ENCODE measurements at regions of chr20 and their contacts with region 1.

Region 1: DNA sequence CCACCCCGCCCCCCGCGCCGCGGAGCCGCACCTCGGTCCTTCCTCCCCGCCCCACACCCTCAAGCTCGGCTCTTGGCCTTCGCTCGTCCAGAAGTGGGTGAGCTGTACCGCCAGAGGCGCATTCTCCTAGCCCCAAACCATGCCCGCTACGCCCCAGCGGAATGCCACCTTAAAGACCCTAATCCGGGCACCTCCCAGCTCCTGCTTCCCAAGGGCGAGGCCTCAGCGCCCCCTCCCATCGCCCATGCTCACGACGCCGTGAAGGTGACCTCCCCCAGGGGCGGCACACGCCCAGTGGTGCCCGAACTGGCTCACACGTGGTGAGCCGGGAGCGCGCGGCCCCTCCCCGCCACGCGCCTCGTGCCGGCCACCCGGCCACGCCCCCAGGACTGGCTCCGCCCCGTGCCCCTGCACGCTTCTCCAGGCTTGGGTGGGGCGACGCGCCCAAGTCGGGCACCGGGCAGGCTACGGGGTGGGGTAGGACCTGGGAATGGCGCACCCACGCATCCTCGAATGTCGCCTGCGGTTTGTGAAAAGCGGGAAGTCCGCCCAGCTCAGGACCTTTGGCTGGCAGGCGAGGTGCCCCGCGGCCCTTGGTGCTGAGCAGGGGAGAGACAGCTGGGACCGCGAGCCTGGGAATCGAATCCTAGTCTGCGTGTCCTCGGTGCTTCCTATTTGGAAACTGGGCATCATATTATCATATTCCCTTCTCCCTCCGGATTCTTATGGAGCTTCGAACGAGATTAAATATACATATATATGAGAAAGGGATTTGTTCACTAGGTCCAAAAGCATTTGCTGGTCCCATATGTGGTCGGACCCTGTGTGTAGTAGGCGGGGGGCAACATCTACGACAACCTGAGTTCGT is 941 bp upstream of the SOX12 start:
- DNase-seq: peak; percentile 93
- ATAC-seq: peak; percentile 62
- H3K4me3 Mint-ChIP-seq: peak overlapping the region; percentile 80
- H3K27ac Mint-ChIP-seq: peak overlapping the region; percentile 83
- H3K4me1 Mint-ChIP-seq: peaks cover 13% of the 10 kb centered on the region
- H3K27me3 Mint-ChIP-seq: no peaks in the 10 kb centered on the region

Region 2: GRCh38 chr20:208942-209566 is 115.4 kb before region 1 on chr20:
- CTCF ChIA-PET with region 1: interaction called, 3 read pairs
- POLR2A ChIA-PET with region 1: no interaction called
- intact Hi-C with region 1: loop called in 1 of 2 experiments (anchors 5 kb)
- DNase-seq: peak; percentile 26
- ATAC-seq: peak; percentile 99
- H3K4me3 Mint-ChIP-seq: no peak overlapping the region
- H3K27ac Mint-ChIP-seq: no peak overlapping the region
- H3K4me1 Mint-ChIP-seq: no peaks in the 10 kb centered on the region
- H3K27me3 Mint-ChIP-seq: peaks cover 6% of the 10 kb centered on the region

Region 3: DNA sequence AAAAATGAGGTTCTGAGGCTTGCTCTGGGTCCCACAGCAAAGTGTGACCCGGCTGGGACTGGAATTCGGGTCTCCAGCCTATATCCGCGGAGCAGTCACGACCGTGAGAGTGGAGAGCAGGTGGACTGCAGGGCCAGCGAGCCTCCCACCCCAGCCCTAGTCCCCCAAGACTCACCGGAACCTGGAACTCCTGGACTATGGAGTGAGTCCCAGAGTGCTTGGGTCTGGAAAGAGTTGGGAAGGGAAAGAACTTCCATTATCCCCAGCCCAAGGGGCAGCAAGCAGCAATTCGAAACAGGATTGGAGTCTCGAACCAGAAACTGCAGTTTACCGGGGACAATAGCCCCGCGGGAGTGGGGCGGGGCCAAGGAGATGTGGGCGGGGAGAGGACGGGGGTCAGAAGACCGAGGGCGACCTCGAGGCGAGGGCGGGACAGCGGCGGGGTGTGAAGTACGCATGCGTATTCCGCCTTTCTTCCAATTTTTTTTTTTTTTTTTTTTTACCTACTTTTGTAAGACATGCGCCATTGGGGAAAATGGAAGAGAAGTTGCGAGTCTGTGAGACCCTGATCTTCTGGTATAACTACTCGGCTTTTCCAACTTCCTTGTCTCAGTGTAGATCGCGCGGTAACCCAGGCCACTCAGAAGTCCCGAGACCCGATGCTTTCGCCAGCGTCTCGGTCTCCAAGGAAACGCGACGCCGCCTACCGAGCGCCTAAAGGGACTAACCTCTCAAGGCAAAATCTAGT is 34.2 kb before region 1 on chr20 and contains the start of gene C20orf96:
- CTCF ChIA-PET with region 1: no interaction called
- POLR2A ChIA-PET with region 1: no interaction called
- intact Hi-C with region 1: loop called (anchors 1 kb)
- DNase-seq: peak; percentile 94
- ATAC-seq: peak; percentile 94
- H3K4me3 Mint-ChIP-seq: no peak within 1 kb of the TSS
- H3K27ac Mint-ChIP-seq: peak within 1 kb of the TSS; percentile 85
- H3K4me1 Mint-ChIP-seq: peaks cover 15% of the 10 kb centered on the region
- H3K27me3 Mint-ChIP-seq: no peaks in the 10 kb centered on the region
- total RNA-seq, gene C20orf96: 7.0 to 8.1 TPM

Region 4: DNA sequence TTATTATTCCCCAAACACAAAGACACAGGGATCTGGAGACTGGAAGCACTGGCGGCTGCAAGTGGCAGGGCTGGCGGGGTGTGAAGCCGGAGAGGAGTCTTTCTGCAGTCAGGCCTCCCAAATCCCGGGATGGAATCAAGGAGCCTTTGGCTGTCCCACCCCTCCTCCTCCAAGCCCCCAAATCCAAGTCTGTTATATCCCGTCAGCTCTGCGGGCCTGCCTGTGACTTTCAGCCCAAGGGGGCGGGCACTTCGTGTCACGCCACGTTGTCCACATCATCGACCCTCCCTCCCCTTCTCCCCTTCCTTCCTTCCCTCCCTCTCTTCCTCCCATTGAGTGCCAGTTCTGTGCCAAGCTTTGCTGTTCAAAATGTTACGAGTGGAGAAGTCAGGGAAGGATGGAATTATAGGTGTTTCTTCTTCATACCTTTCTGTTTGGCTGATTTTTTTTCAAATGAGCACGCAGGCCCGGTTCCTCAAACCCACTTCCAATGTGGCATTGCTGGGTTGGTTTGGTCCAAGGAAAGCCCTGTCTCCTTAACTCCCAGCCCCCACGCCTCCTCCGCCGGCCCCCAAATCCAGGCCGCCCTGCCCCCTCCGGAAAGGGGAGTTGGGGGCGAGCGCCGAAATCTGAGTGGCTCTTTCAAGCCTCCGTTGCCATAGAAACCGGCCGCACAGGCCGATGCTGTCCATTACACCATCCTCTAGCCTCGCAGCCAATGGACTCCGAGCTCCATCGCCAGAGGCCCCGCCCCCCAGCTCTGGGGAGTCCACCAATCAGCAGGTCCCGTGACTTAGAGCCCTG is 14.4 kb before region 1 on chr20:
- CTCF ChIA-PET with region 1: interaction called, 9 read pairs
- POLR2A ChIA-PET with region 1: interaction called, 3 read pairs
- intact Hi-C with region 1: loop called (anchors 1 kb)
- DNase-seq: peak; percentile 91
- ATAC-seq: peak; percentile 100
- H3K4me3 Mint-ChIP-seq: peak overlapping the region; percentile 56
- H3K27ac Mint-ChIP-seq: no peak overlapping the region
- H3K4me1 Mint-ChIP-seq: peaks cover 11% of the 10 kb centered on the region
- H3K27me3 Mint-ChIP-seq: no peaks in the 10 kb centered on the region

Region 5: DNA sequence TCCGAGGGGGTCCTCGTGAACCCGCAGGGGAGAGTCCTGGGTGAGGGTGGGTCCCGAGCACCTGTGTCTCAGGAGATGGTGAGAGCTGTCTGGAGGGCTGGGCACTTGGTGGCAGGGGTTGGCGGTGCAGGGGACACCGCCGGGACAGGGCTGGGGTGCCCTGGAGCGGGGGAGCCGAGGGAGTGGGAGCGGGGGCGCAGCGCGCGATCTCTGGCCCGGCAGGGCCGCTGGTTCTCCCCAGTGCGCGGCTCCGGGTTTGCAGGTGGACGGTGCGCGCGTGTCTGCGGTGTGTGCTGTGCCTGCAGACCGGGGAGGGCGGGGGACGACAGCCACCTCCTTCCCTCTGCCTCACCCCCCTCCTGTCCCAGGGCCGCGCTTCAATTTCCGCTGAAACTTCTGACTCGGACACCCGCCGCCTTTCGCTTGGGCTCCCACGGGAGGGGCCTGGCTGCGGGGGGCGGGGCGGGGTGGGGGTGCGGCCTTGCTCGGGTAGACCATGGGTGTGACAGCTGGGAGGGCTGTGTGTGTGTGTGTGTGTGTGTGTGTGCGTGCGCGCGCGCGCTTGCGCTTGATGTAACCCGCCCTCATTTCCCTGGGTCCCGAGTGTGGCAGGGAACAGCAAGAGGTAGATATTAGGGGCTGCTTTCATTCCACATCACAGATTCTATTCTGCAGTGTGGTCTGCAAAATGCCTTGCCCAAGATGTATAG is 57.3 kb after region 1 on chr20:
- CTCF ChIA-PET with region 1: interaction called, 3 read pairs
- POLR2A ChIA-PET with region 1: no interaction called
- intact Hi-C with region 1: loop called in 1 of 2 experiments (anchors 1 kb)
- DNase-seq: peak; percentile 88
- ATAC-seq: peak; percentile 70
- H3K4me3 Mint-ChIP-seq: peak overlapping the region; percentile 81
- H3K27ac Mint-ChIP-seq: peak overlapping the region; percentile 83
- H3K4me1 Mint-ChIP-seq: peaks cover 14% of the 10 kb centered on the region
- H3K27me3 Mint-ChIP-seq: no peaks in the 10 kb centered on the region

Region 6: GRCh38 chr20:433300-433975 is 109.0 kb after region 1 on chr20:
- CTCF ChIA-PET with region 1: no interaction called
- POLR2A ChIA-PET with region 1: no interaction called
- intact Hi-C with region 1: loop called in 1 of 2 experiments (anchors 1 kb)
- DNase-seq: peak; percentile 86
- ATAC-seq: peak; percentile 86
- H3K4me3 Mint-ChIP-seq: peak overlapping the region; percentile 51
- H3K27ac Mint-ChIP-seq: peak overlapping the region; percentile 94
- H3K4me1 Mint-ChIP-seq: peaks cover 67% of the 10 kb centered on the region
- H3K27me3 Mint-ChIP-seq: no peaks in the 10 kb centered on the region

Region 7: GRCh38 chr20:530321-530720 is 205.9 kb after region 1 on chr20:
- CTCF ChIA-PET with region 1: no interaction called
- POLR2A ChIA-PET with region 1: no interaction called
- intact Hi-C with region 1: no loop called
- DNase-seq: no peak
- ATAC-seq: no peak
- H3K4me3 Mint-ChIP-seq: no peak overlapping the region
- H3K27ac Mint-ChIP-seq: peak overlapping the region; percentile 91
- H3K4me1 Mint-ChIP-seq: peaks cover 46% of the 10 kb centered on the region
- H3K27me3 Mint-ChIP-seq: no peaks in the 10 kb centered on the region

Region 8: GRCh38 chr20:543369-544152 is 219.2 kb after region 1 on chr20 and contains the start of gene CSNK2A1:
- CTCF ChIA-PET with region 1: no interaction called
- POLR2A ChIA-PET with region 1: no interaction called
- intact Hi-C with region 1: loop called in 1 of 2 experiments (anchors 1 kb)
- DNase-seq: peak; percentile 97
- ATAC-seq: peak; percentile 97
- H3K4me3 Mint-ChIP-seq: peak within 1 kb of the TSS; percentile 94
- H3K27ac Mint-ChIP-seq: peak within 1 kb of the TSS; percentile 96
- H3K4me1 Mint-ChIP-seq: peaks cover 49% of the 10 kb centered on the region
- H3K27me3 Mint-ChIP-seq: no peaks in the 10 kb centered on the region
- total RNA-seq, gene CSNK2A1: 179 to 254 TPM

Region 9: GRCh38 chr20:840503-840857 is 516.1 kb after region 1 on chr20:
- CTCF ChIA-PET with region 1: no interaction called
- POLR2A ChIA-PET with region 1: no interaction called
- intact Hi-C with region 1: no loop called
- DNase-seq: no peak
- ATAC-seq: no peak
- H3K4me3 Mint-ChIP-seq: peak overlapping the region; percentile 67
- H3K27ac Mint-ChIP-seq: no peak overlapping the region
- H3K4me1 Mint-ChIP-seq: peaks cover 44% of the 10 kb centered on the region
- H3K27me3 Mint-ChIP-seq: no peaks in the 10 kb centered on the region

Measured in activated CD4-positive, alpha-beta T cell treated with anti-CD3 and anti-CD28 coated beads for 36 hours (primary cell).